Right ventricle myocardium superior (tissue), 1 donor: ENCODE measurements at regions of chr3 and their contacts with region 1.

Region 1: GRCh38 chr3:175103298-175103697 is 244.2 kb downstream of the NAALADL2 start:
- DNase-seq: no peak
- ATAC-seq: no peak

Region 2: DNA sequence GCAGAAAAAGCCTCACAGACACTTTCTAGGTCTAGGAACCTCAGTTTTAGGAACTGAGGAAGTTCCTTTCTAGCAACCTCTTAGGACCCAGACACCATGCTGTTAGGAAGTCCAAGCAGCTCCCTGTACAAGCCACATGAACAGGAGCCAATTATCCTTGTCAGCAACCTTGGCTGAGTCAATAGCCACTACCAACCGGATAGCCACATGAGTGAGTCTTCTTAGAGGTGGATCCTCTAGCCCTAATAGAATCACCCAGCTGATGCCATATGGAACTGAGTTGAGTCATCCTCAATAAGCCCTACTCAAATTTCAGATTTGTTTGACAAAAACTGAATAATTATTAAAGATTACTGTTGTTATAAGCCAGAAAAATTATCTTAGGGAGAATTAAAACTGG is 1449.5 kb before region 1 on chr3:
- intact Hi-C with region 1: loop called (anchors 5 kb)
- DNase-seq: no peak
- ATAC-seq: no peak

Region 3: GRCh38 chr3:175163686-175164085 is 60.4 kb after region 1 on chr3:
- intact Hi-C with region 1: no loop called
- DNase-seq: no peak
- ATAC-seq: no peak